Ovary (tissue), 10 donors: ENCODE measurements at regions of chr6 and their contacts with region 1.

Region 1: DNA sequence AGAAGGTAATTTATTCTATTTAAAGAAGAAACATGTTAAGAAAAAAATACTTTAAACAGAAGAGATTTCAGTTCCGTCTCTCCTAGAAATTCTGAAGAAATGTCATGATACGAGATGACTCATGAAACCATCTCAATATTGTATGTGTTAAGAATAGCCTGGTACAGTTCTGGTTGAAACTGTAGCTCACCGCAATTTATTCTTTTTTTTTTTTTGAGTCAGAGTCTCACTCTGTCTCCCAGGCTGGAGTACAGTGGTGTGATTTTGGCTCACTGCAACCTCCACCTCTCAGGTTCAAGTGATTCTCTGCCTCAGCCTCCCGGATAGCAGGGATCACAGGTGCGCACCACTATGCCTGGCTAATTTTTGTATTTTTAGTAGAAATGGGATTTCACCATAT is 103.3 kb downstream of the ARHGAP18 start:
- DNase-seq: no peak
- H3K4me3 ChIP-seq: no peak overlapping the region
- H3K27ac ChIP-seq: no peak overlapping the region
- H3K4me1 ChIP-seq: no peaks in the 10 kb centered on the region
- H3K27me3 ChIP-seq: no peaks in the 10 kb centered on the region
- CTCF ChIP-seq: no peak
- EP300 ChIP-seq: no peak
- POLR2A ChIP-seq: no peak

Region 2: GRCh38 chr6:128216917-128217316 is 1389.7 kb before region 1 on chr6:
- intact Hi-C with region 1: no loop called
- DNase-seq: no peak
- H3K4me3 ChIP-seq: no peak overlapping the region
- H3K27ac ChIP-seq: no peak overlapping the region
- H3K4me1 ChIP-seq: no peaks in the 10 kb centered on the region
- H3K27me3 ChIP-seq: no peaks in the 10 kb centered on the region
- CTCF ChIP-seq: no peak
- EP300 ChIP-seq: no peak
- POLR2A ChIP-seq: no peak

Region 3: DNA sequence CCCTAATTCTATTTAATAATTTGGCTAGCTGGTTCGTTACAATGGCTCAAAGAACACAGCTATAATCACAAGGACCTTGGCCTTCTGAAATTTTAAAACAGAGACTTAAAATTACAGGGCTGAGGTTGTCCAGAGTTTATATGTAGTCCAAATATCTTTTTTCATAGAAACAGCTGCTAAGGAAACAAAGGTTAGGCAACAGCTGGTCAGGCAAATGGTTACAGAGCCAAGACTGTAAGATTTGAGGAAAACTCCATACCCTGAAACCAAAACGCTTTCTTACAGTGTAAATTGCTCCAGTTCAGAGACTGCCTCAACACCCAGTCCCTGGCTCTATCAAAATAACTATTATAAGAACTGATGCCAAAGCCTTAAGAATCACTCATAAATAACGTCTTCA is 113.0 kb after region 1 on chr6:
- intact Hi-C with region 1: loop called in 2 of 4 experiments (anchors 10 kb)
- DNase-seq: peak in 1 of 5 donors; percentile 39
- H3K4me3 ChIP-seq: no peak overlapping the region
- H3K27ac ChIP-seq: no peak overlapping the region
- H3K4me1 ChIP-seq: no peaks in the 10 kb centered on the region
- H3K27me3 ChIP-seq: no peaks in the 10 kb centered on the region
- CTCF ChIP-seq: no peak
- EP300 ChIP-seq: no peak
- POLR2A ChIP-seq: no peak